Natural killer cell (primary cell): ENCODE measurements at regions of chr10 and their contacts with region 1.

Region 1: DNA sequence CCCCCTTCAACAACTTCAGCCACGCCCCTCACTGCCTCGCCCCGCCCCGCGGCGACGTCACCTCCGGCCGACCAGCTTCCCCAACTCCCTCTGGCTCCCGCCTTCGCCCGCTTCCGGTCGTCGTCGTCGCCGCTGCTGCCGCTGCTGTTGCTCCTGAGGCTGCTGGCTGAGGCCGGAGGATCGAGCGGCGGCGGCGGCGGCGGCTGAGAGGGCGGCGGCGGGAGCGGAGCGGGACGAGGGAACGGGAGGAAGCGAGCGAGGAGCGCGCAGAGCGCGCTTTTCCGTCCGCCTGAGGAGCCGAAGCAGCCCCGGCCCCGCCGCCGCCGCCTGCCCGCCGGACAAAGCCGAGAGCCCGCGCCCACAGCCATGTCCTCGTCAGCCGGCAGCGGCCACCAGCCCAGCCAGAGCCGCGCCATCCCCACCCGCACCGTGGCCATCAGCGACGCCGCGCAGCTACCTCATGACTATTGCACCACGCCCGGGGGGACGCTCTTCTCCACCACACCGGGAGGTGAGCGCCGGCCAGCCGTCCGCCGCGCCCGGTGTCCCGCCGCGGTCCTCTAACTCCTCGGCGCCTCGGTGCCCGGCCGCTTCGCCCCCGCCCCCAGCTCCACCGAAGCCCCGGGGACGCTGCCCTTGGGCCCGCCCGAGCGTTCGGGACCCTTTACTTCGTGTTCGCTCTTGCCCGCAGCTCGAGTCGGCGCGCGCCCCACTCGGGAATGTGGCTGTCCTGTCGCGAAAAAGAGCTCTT is at the start of gene EIF4EBP2:
- DNase-seq: peak; percentile 97 to 99
- ATAC-seq: peak; percentile 94 to 99 (median 95)
- H3K4me3 ChIP-seq: peak within 1 kb of the TSS; percentile 80
- H3K4me3 Mint-ChIP-seq: peak within 1 kb of the TSS; percentile 95
- H3K27ac ChIP-seq: peak within 1 kb of the TSS; percentile 54
- H3K27ac Mint-ChIP-seq: peak within 1 kb of the TSS; percentile 93 to 97
- H3K4me1 ChIP-seq: peaks cover 21% of the 10 kb centered on the region
- H3K4me1 Mint-ChIP-seq: peaks cover 37 to 38% of the 10 kb centered on the region in 2 donors
- H3K27me3 ChIP-seq: no peaks in the 10 kb centered on the region
- H3K27me3 Mint-ChIP-seq: no peaks in the 10 kb centered on the region
- CTCF ChIP-seq: no peak
- total RNA-seq, gene EIF4EBP2: 60.6 to 71.6 (median 71.1) TPM

Region 2: GRCh38 chr10:70233109-70233938 is 170.9 kb before region 1 on chr10 and contains the start of gene PPA1:
- intact Hi-C with region 1: loop called (anchors 1 kb)
- DNase-seq: peak; percentile 99
- ATAC-seq: peak; percentile 96 to 100 (median 97)
- H3K4me3 ChIP-seq: peak within 1 kb of the TSS; percentile 69
- H3K4me3 Mint-ChIP-seq: peak within 1 kb of the TSS; percentile 89
- H3K27ac ChIP-seq: peak within 1 kb of the TSS; percentile 78
- H3K27ac Mint-ChIP-seq: peak within 1 kb of the TSS; percentile 58 to 85
- H3K4me1 ChIP-seq: peaks cover 18% of the 10 kb centered on the region
- H3K4me1 Mint-ChIP-seq: peaks cover 15 to 17% of the 10 kb centered on the region in 2 donors
- H3K27me3 ChIP-seq: no peaks in the 10 kb centered on the region
- H3K27me3 Mint-ChIP-seq: peaks cover 0 to 6% of the 10 kb centered on the region in 2 donors
- CTCF ChIP-seq: no peak
- total RNA-seq, gene PPA1: 17.0 to 26.5 (median 19.2) TPM

Region 3: DNA sequence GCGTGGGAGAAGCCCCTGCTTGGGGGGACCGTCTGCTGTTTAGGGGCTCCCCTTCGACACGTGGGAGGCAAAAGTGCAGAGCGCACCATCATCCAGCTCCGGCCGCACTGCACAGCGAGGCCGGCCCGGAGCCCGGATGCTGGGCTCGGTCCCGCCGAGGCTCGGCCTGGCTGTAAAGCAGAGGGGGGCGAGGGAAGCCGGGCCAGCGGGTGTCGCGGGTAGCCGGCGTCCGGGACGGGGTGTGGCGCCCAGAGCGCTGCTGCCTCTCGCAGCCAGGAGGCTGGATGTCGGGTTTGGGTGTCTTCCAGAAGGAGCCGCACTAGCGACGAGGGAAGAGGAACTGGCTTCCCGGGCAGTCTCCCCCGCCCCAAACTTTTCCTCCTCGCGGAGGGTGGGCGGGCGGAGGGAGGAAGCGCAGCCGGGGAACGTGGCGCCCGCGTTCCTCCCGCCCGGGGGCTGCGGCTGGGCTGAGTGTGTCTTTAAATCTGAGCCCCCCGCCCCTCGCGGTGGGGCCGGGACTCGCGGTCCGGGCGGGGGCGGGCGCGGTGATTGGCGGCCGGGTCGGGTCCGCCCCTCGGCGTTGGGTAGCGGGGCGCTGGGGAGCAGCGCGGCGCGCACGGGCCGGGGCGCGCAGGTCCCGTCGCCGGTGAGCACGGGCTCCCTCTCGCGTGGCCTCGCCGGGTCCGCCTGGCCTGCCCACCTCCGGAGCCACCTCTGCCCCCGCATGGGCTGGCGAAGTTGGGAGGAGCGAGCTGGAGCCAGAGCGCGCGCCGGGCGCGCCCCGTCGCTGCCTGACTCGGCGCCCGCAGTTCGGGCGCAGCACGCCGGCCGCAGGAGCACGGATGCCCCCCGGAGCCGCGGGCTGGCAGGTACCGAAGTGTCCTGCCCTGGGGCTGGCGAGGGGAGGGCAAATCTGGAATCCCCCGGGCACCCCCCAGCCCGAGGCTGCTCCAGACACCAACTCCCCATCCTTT is 74.3 kb after region 1 on chr10 and contains the start of gene PALD1:
- intact Hi-C with region 1: no loop called
- DNase-seq: peak in 1 of 2 donors; percentile 51
- ATAC-seq: peak in 2 of 3 donors; percentile 27 to 50
- H3K4me3 ChIP-seq: peak within 1 kb of the TSS; percentile 39
- H3K4me3 Mint-ChIP-seq: peak within 1 kb of the TSS; percentile 77
- H3K27ac ChIP-seq: no peak within 1 kb of the TSS
- H3K27ac Mint-ChIP-seq: peak within 1 kb of the TSS; percentile 54 to 75
- H3K4me1 ChIP-seq: peaks cover 42% of the 10 kb centered on the region
- H3K4me1 Mint-ChIP-seq: peaks cover 25 to 47% of the 10 kb centered on the region in 2 donors
- H3K27me3 ChIP-seq: peaks cover 5% of the 10 kb centered on the region
- H3K27me3 Mint-ChIP-seq: peaks cover 13 to 17% of the 10 kb centered on the region in 2 donors
- CTCF ChIP-seq: no peak
- total RNA-seq, gene PALD1: 0.21 TPM in 1 of 3 donors, not detected in the others

Region 4: DNA sequence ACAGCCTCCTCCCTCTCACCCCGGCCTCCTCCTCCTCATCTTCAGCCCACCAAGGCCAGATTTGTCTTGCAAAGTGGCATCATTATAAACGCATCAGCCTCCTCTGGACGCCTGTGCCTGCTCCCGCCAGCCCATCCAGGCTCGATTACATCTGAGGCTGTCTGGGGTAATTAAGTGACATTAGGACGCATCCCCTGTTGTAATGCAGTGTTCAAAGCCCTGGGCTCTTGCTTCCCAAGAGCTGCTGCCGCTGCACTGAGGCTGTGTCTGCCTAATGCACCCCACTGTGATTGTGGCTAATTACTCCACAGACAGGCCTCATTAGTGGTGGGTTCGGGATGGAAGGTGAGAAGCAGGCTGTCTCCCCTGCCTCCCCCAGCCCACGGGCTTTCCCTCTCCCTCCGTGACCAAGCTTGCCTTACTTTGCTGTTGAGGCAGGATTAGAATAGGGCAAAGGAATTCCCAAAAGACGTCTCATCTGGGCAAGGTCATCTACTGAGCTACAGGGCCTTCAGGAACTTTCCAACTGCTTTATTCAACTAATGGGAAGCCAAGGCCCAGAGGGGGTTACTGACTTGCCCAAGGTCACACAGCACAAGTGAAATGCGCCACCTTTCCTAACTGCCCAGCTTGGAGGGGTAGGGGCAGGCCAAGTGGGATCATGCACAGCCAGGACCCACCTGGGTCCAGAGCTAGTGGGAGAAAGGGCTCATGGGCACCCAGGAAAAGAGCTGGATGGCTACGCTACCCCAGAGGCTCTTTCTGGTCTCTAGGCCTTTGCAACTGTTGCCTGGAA is 550.4 kb after region 1 on chr10:
- intact Hi-C with region 1: no loop called
- DNase-seq: no peak
- ATAC-seq: no peak
- H3K4me3 ChIP-seq: no peak overlapping the region
- H3K4me3 Mint-ChIP-seq: no peak overlapping the region
- H3K27ac ChIP-seq: no peak overlapping the region
- H3K27ac Mint-ChIP-seq: no peak overlapping the region
- H3K4me1 ChIP-seq: no peaks in the 10 kb centered on the region
- H3K4me1 Mint-ChIP-seq: no peaks in the 10 kb centered on the region
- H3K27me3 ChIP-seq: no peaks in the 10 kb centered on the region
- H3K27me3 Mint-ChIP-seq: peaks cover 0 to 6% of the 10 kb centered on the region in 2 donors
- CTCF ChIP-seq: no peak